GM10248 (cell line): ENCODE measurements at regions of chr22 and their contacts with region 1.

Region 1: DNA sequence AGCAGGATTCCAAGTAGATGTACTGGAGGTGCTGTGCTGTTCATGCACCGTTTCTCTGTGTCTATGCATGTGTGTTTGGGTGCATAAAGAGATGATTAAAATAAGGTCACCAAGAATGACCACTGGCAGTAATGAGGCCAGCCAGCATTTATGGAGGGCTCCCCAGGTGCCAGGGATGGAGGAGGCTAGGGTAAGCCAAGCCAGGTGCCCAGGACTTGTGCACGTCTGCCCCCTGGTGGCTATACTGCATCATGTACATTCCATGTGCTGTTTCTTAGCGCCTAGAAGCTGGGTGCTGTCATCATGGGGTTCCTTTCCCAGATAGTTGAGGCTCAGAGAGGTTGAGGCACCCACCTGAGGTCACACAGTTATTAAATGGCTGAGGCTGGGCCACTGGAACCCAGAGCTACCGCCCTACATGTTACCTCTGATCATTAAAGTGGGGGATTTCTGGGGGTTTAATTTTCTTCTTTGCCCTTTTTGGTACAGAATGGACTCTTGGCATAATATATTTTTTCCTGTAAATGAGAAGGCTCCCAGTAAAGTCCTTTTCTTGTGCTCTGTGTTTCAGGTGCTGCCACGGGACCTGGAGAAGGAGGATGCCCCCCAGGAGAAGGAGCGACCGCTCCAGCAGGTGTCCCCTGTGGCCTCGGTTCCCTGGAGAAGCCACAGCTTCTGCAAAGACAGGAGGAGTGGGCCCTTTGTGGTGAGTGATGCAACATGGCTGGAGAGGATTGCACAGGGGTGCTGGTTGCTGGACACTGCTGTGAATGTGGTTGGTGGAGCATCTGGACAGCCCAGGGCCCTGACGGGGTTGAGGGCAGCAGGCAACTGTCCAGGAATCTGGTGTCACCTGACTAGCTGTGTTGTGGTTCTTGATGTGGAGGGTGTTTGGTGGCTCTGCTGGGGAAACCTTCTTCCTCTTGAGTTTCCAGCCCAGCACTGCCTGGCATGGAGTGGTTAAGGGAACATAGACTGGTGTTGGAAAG is 96.4 kb downstream of the KIAA1671 start:
- DNase-seq: peak; percentile 84
- CTCF ChIP-seq: peak; percentile 76

Region 2: DNA sequence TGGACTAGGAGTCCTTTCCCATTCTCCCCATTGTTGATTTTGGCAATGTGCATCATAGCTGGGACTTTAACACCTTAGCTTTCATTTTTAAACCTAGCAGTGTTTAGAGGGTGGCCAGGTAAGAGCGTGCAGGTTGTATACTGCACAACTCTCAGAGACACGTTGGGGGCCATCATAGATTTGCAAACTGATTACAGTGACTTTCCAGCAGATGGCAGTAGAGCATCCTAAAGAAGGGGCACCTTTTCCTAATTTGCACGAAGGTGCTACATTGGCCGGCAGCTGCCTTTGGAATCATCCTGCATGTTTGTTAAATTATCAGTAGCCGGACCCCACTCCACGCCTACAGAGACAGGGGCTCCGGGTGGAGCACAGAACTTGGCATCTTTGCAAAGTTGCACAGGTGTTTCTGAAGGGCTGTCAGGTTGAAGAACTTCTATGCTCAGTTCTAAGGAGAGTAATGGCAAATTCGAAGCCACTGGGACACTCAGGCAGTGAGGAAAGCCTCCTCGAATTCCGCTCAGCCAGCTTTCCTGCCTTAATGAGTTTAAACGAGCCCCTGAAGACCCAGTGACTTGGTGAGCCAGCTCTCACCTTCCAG is 110.1 kb before region 1 on chr22:
- CTCF ChIA-PET with region 1: interaction called, 75 read pairs
- POLR2A ChIA-PET with region 1: no interaction called
- DNase-seq: peak; percentile 73
- CTCF ChIP-seq: peak; percentile 52

Region 3: DNA sequence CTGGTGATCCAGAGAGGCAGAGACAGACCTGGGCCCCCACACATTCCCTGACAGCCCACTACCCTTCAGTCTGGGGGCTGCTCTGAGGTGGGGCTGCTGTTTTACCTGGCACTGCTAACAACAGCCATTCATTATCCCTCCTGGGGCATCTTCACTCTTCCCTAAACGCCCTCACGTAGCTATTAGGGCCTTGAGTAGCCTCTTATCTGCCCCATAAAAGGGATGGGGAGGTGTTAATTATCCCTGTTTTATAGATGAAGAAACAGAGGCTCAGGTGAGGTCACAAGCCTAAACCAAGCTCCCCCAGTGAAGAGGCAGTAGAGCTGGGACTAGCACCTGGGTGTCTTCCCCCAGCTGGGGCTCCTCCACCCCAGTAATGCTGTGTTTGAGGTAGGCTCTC is 16.9 kb before region 1 on chr22:
- CTCF ChIA-PET with region 1: interaction called, 10 read pairs
- POLR2A ChIA-PET with region 1: no interaction called
- DNase-seq: no peak
- CTCF ChIP-seq: no peak

Region 4: DNA sequence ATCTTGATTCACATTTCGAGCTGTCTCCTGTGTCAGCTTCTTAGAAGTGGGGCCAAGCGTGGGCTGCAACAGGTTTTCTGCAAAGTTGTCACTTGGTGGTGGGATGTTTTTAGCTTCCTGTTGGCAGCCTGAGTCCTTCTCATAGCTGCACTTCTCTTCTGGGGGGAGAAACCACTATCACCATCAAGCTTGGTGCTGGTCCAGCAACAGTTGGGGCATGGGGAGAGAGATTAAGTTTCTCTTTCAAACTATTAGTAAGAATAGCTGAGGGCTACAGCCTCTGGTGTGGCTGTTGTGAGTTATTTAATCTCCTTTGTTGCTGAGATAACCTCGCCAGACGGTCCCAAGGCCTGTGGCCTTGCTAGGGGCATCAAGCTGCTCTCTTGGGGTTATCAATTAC is 27.4 kb after region 1 on chr22:
- CTCF ChIA-PET with region 1: interaction called, 10 read pairs
- POLR2A ChIA-PET with region 1: no interaction called
- DNase-seq: no peak
- CTCF ChIP-seq: no peak